ENCODE measurements at regions of chr17 and their contacts with region 1.

Region 1: GRCh38 chr17:55770148-55770870 is 19.5 kb downstream of the PCTP start:
- DNase-seq: peak; percentile 86
- ATAC-seq: peak; percentile 89
- H3K4me3 ChIP-seq: no peak overlapping the region
- H3K27ac ChIP-seq: no peak overlapping the region; the same call in 1 of the 2 replicates
- H3K4me1 ChIP-seq: peaks cover 15% of the 10 kb centered on the region
- H3K27me3 ChIP-seq: no peaks in the 10 kb centered on the region
- CTCF ChIP-seq: peak; percentile 84

Region 2: GRCh38 chr17:55743103-55743679 is 27.1 kb before region 1 on chr17:
- CTCF ChIA-PET with region 1: no interaction called
- POLR2A ChIA-PET with region 1: no interaction called
- intact Hi-C with region 1: loop called (anchors 2 kb)
- DNase-seq: peak; percentile 97
- ATAC-seq: peak; percentile 89
- H3K4me3 ChIP-seq: peak overlapping the region; percentile 4; the same call in 1 of the 2 replicates
- H3K27ac ChIP-seq: 0 out of 2 replicates have a peak overlapping the region, but pooled peaks have one; percentile 1
- H3K4me1 ChIP-seq: peaks cover 11% of the 10 kb centered on the region
- H3K27me3 ChIP-seq: peaks cover 8% of the 10 kb centered on the region
- CTCF ChIP-seq: no peak